ENCODE measurements at regions of chr1 and their contacts with region 1.

Region 1: GRCh38 chr1:93680757-93681550 is 683 bp downstream of the BCAR3 start:
- DNase-seq: peak; percentile 88
- ATAC-seq: peak; percentile 81 to 92

Region 2: DNA sequence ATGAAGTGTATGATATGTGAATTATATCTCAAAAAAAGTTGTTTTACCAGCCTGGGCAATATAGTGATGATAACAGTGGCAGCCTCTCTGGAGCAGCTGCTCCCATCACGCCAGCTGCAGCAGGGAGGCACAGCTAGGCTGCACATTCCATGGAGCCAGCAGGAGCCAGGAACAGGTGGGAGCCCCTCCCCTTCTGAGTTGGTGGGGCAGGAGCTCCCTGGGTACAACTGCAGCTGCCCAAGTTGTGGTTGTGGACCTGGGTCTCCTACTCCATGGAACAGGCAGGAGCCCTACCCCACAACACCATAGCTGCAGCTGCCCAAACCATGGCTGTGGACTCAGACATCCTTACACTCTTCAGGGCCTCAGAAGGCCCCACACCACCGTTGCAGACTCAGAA is 254.8 kb before region 1 on chr1:
- intact Hi-C with region 1: no loop called
- DNase-seq: no peak
- ATAC-seq: no peak

Region 3: GRCh38 chr1:93629099-93630059 is 51.6 kb before region 1 on chr1:
- intact Hi-C with region 1: loop called (anchors 2 to 5 kb)
- DNase-seq: no peak
- ATAC-seq: peak; percentile 67 to 69

Region 4: GRCh38 chr1:93661829-93662474 is 19.0 kb before region 1 on chr1:
- intact Hi-C with region 1: loop called in 1 of 2 experiments (anchors 2 kb)
- DNase-seq: no peak
- ATAC-seq: no peak

Region 5: DNA sequence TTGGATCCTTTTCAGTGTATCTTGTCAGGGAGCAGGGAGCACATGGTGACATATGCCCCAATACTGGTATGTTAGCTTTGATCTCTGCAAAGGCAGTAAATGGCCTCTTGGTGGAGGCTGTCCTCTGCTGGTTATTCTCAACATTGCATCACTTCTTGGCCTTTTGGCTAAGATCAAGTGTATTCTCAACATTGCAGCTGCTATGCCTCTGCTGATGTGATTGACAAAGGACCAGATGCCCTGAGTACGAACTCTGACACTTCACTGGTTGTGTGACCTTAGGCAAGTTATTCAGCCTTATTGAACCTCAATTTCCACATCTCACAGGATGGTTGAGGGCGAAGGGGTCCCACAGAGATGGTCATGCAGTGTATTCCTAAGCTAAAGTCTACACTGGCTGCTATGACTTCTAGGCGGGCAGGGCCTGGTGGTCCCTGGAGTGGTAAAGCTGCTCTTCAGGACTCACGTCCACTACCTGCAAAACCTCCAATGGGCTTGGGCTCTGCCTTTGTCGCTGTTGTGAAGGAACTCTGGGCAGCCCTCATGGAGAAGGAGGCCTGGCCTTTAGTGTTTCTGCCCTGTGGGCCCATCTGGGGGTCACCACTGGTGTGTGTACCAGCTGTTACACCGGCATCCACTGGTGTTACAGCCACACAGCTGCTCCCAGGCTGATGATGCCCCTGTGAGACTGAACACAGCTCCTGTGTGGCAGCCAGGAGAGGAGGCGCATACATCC is 133.3 kb after region 1 on chr1:
- intact Hi-C with region 1: loop called in 1 of 2 experiments (anchors 2 kb)
- DNase-seq: peak; percentile 46
- ATAC-seq: peak; percentile 76 to 82

Region 6: DNA sequence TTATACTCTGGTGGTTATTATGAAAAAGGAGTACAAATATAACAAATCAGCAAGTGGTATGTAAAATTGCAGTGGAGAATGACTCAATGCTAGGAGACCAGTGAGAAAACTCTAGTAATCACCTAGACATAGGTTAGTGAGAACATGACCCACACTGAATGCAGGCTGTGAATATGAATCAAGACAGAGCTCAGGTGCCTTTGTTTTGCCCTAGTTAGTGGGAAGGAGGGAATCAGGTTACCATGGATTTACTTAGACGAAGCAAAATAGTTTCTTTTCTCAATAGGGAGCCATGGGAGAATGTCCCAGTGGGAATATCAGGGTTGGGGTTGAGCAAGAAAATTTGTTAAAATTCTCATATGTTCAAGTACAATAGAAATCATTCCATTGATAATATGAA is 238.8 kb after region 1 on chr1:
- intact Hi-C with region 1: no loop called
- DNase-seq: no peak
- ATAC-seq: no peak

Measured in left cardiac atrium (tissue), 4 donors.